ENCODE measurements at regions of chr6 and their contacts with region 1.

Region 1: DNA sequence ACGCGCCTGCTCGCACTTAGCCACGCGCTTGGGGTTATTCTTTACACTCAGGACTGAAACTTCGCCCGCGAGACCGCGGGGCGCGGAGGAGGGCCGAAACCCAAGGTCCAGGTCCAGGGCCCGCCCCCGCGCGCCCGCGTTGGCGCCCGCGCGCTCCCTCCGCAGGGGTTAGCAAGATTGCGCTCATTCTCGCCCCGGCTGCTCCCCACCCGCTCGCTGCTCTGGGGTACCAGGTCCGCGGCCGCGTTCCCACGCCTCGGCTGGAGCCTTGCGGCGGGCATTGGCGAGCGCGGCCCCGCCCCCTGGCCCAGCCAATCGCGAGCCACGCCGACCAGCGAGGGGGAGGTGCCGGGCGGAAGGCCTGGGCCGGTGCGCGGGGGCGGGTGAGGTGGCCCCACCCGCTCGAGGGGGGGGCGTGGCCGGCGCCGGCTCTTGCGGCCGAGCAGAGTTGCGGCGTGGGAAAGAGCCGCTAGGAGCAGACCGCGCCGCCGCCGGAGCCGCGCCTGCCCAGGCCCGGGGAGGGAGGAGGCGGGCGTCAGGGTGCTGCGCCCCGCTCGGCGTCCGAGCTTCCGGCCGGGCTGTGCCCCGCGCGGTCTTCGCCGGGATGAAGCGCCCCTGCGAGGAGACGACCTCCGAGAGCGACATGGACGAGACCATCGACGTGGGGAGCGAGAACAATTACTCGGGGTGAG is at the start of gene HEY2:
- DNase-seq: peak; percentile 63 to 92 (median 69)
- ATAC-seq: peak; percentile 93
- H3K4me3 ChIP-seq: peak within 1 kb of the TSS; percentile 72
- H3K4me3 Mint-ChIP-seq: peak within 1 kb of the TSS; percentile 86 to 99 (median 93)
- H3K27ac ChIP-seq: peak within 1 kb of the TSS; percentile 45
- H3K27ac Mint-ChIP-seq: peak within 1 kb of the TSS in 8 of 9 donors; percentile 41 to 94 (median 68)
- H3K4me1 ChIP-seq: peaks cover 24 to 34% of the 10 kb centered on the region in 2 donors
- H3K4me1 Mint-ChIP-seq: peaks cover 26 to 50% (median 35%) of the 10 kb centered on the region in 7 donors
- H3K27me3 ChIP-seq: peaks cover 14 to 19% of the 10 kb centered on the region in 2 donors
- H3K27me3 Mint-ChIP-seq: peaks cover 19 to 82% (median 55%) of the 10 kb centered on the region in 5 donors
- total RNA-seq, gene HEY2: 0.34 to 0.46 (median 0.46) TPM in 3 of 5 experiments, not detected in the others

Region 2: DNA sequence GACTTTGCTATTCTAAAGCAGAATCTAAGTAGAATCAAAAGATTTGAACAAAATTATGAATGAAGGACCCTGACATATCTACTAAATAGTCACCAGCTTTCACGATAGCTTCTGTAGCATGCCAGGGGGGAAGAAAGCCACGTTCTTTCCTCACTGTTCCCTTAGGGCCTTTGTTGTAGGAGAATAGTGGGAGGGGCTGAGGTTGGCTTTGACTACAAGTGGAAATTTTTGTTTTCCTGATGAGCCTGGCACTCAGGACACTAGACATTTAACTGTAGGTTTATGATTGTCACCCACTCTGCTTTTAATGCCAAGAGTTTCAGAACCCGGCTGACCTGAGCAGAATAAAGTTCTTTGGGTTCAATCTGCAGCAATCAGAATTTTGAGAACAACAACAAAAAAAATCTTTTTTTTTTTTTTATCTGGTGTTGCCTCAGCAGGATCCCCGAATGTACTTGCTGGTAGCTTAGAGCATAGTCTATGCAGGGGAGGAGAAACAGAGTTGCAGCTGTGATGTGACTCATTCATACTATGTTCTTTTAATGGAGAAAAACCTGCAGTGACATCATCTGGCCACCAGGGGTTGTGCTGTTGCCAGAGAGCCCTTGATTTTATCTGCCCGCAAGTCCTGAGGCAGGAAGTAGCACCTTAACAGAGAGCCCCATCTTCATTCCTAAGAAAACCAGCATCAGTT is 557.3 kb before region 1 on chr6:
- CTCF ChIA-PET with region 1: no interaction called
- POLR2A ChIA-PET with region 1: no interaction called
- intact Hi-C with region 1: loop called (anchors 1 to 5 kb)
- DNase-seq: peak in 8 of 9 donors; percentile 31 to 56 (median 46)
- ATAC-seq: peak; percentile 89
- H3K4me3 ChIP-seq: no peak overlapping the region
- H3K4me3 Mint-ChIP-seq: no peak overlapping the region
- H3K27ac ChIP-seq: no peak overlapping the region
- H3K27ac Mint-ChIP-seq: no peak overlapping the region
- H3K4me1 ChIP-seq: no peaks in the 10 kb centered on the region
- H3K4me1 Mint-ChIP-seq: peaks cover 0 to 4% (median 0%) of the 10 kb centered on the region in 7 donors
- H3K27me3 ChIP-seq: no peaks in the 10 kb centered on the region
- H3K27me3 Mint-ChIP-seq: peaks cover 0 to 6% (median 3%) of the 10 kb centered on the region in 5 donors

Region 3: GRCh38 chr6:125512621-125513020 is 236.7 kb before region 1 on chr6:
- CTCF ChIA-PET with region 1: no interaction called
- POLR2A ChIA-PET with region 1: no interaction called
- intact Hi-C with region 1: loop called (anchors 1 kb)
- DNase-seq: peak in 1 of 9 donors; percentile 9
- ATAC-seq: no peak
- H3K4me3 ChIP-seq: no peak overlapping the region
- H3K4me3 Mint-ChIP-seq: no peak overlapping the region
- H3K27ac ChIP-seq: no peak overlapping the region
- H3K27ac Mint-ChIP-seq: no peak overlapping the region
- H3K4me1 ChIP-seq: no peaks in the 10 kb centered on the region
- H3K4me1 Mint-ChIP-seq: no peaks in the 10 kb centered on the region
- H3K27me3 ChIP-seq: no peaks in the 10 kb centered on the region
- H3K27me3 Mint-ChIP-seq: peaks cover 10 to 37% (median 19%) of the 10 kb centered on the region in 5 donors

Region 4: GRCh38 chr6:125790358-125791150 is 41.2 kb after region 1 on chr6 and contains the start of gene NCOA7:
- CTCF ChIA-PET with region 1: interaction called, 5 read pairs
- POLR2A ChIA-PET with region 1: interaction called, 19 read pairs
- intact Hi-C with region 1: loop called (anchors 1 kb)
- DNase-seq: peak; percentile 69 to 84 (median 81)
- ATAC-seq: peak; percentile 89
- H3K4me3 ChIP-seq: peak within 1 kb of the TSS; percentile 80
- H3K4me3 Mint-ChIP-seq: peak within 1 kb of the TSS; percentile 86 to 98 (median 93)
- H3K27ac ChIP-seq: peak within 1 kb of the TSS; percentile 96
- H3K27ac Mint-ChIP-seq: peak within 1 kb of the TSS; percentile 97 to 100 (median 98)
- H3K4me1 ChIP-seq: peaks cover 28 to 37% of the 10 kb centered on the region in 2 donors
- H3K4me1 Mint-ChIP-seq: peaks cover 29 to 60% (median 51%) of the 10 kb centered on the region in 7 donors
- H3K27me3 ChIP-seq: no peaks in the 10 kb centered on the region
- H3K27me3 Mint-ChIP-seq: no peaks in the 10 kb centered on the region
- total RNA-seq, gene NCOA7: 30.6 to 55.6 (median 38.0) TPM

Region 5: DNA sequence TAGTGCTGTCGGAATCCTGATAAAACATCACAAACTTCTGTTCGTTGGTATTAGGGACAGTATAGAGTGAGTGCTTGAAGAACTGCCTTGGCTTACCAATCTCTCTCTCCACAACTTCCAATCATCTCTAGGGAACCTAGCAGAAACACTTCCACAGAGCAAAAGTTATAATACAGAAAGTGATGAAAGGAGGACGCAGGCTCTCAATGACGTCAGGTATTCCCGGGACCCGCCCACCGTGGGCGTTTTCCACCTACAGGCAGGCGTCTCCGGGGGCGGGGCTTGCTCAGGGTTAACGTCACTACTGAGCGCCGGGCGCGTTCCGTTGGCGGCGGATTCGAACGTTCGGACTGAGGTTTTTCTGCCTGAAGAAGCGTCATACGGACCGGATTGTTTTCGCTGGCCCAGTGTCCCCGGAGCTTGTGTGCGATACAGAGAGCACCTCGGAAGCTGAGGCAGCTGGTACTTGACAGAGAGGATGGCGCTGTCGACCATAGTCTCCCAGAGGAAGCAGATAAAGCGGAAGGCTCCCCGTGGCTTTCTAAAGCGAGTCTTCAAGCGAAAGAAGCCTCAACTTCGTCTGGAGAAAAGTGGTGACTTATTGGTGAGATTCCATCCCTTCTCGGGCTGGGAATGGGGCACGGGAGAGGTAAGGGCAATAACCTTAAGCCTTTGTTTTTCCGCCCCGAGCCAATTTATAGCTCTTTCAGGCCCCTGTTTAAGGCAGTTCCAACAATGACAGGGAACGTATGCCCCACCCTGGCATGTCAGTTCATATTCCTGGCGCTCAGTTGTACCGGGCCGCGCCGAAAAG is 590.7 kb after region 1 on chr6 and contains the start of gene CENPW:
- CTCF ChIA-PET with region 1: no interaction called
- POLR2A ChIA-PET with region 1: no interaction called
- intact Hi-C with region 1: loop called in 1 of 2 experiments (anchors 5 kb)
- DNase-seq: peak; percentile 84 to 96 (median 87)
- ATAC-seq: peak; percentile 98
- H3K4me3 ChIP-seq: peak within 1 kb of the TSS; percentile 80
- H3K4me3 Mint-ChIP-seq: no peak within 1 kb of the TSS
- H3K27ac ChIP-seq: peak within 1 kb of the TSS; percentile 33
- H3K27ac Mint-ChIP-seq: no peak within 1 kb of the TSS
- H3K4me1 ChIP-seq: peaks cover 6 to 12% of the 10 kb centered on the region in 2 donors
- H3K4me1 Mint-ChIP-seq: peaks cover 5 to 21% (median 12%) of the 10 kb centered on the region in 7 donors
- H3K27me3 ChIP-seq: no peaks in the 10 kb centered on the region
- H3K27me3 Mint-ChIP-seq: no peaks in the 10 kb centered on the region
- total RNA-seq, gene CENPW: 1.2 to 37.1 (median 3.9) TPM